ENCODE measurements at regions of chr22 and their contacts with region 1.

Region 1: GRCh38 chr22:37777122-37777687 is 30.5 kb upstream of the GCAT start:
- DNase-seq: no peak
- H3K4me3 ChIP-seq: no peak overlapping the region
- H3K27ac ChIP-seq: no peak overlapping the region
- H3K4me1 ChIP-seq: peaks cover 0 to 2% (median 0%) of the 10 kb centered on the region in 4 experiments; a peak in 2 of 7 replicates
- H3K27me3 ChIP-seq: peaks cover 0 to 12% (median 4%) of the 10 kb centered on the region in 4 experiments; a peak in 3 of 7 replicates
- CTCF ChIP-seq: no peak
- EP300 ChIP-seq: no peak
- POLR2A ChIP-seq: no peak
- RAD21 ChIP-seq: no peak

Region 2: GRCh38 chr22:37792494-37792893 is 15.3 kb after region 1 on chr22:
- CTCF ChIA-PET with region 1: interaction called, 22 read pairs
- POLR2A ChIA-PET with region 1: interaction called, 6 read pairs
- DNase-seq: no peak
- H3K4me3 ChIP-seq: no peak overlapping the region
- H3K27ac ChIP-seq: no peak overlapping the region
- H3K4me1 ChIP-seq: no peaks in the 10 kb centered on the region
- H3K27me3 ChIP-seq: peaks cover 0 to 6% (median under 1%) of the 10 kb centered on the region in 4 experiments; a peak in 2 of 7 replicates
- CTCF ChIP-seq: no peak
- EP300 ChIP-seq: no peak
- POLR2A ChIP-seq: no peak
- RAD21 ChIP-seq: no peak

Measured in H1 (cell line).